Activated naive CD8-positive, alpha-beta T cell treated with anti-CD3 and anti-CD28 coated beads, Interleukin-2, amount 10 ng/mL, durations not matched to agents 7 days and 5 days (primary cell): ENCODE measurements at regions of chr5 and their contacts with region 1.

Region 1: DNA sequence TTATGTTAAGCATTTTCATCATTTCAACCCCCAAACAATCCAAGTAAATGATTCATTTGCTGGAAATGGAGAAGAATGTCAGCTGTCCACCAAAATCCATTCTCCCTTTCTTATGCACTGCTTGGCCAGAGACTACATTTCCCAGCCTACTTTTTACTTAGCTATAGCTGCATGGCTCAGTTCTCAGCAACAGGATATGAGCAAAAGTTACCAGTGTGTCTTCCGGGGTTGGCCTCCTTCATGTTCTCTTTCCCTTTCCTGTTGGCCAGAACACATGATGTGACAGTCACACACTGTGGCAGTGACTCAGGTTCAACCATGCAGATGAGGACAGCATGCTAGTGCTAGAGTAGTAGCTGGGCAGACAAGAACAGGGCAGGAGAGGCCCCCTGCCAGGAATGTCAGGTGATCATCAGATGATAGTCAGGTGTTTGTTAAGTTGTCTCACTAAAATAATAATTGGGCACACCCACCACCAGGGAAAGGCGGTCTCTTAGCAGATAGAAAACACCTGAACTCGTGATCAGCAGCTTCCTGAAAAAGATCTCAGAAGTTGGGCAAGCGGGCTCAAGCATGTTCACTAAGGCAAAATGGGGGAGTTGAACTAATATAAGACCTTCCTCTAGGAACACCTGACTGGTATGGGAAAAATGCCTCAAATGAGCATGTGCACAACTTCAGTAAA is 12.2 kb downstream of the GPR150 start:
- DNase-seq: peak; percentile 57
- ATAC-seq: peak; percentile 100
- H3K4me3 Mint-ChIP-seq: peak overlapping the region; percentile 44
- H3K27ac Mint-ChIP-seq: peak overlapping the region; percentile 94
- H3K4me1 Mint-ChIP-seq: peaks cover 10% of the 10 kb centered on the region
- H3K27me3 Mint-ChIP-seq: peaks cover 8% of the 10 kb centered on the region

Region 2: GRCh38 chr5:95620030-95620869 is 11.9 kb before region 1 on chr5 and contains the start of gene GPR150:
- POLR2A ChIA-PET with region 1: interaction called, 20 read pairs
- DNase-seq: peak; percentile 81
- ATAC-seq: peak; percentile 68
- H3K4me3 Mint-ChIP-seq: peak within 1 kb of the TSS; percentile 89
- H3K27ac Mint-ChIP-seq: peak within 1 kb of the TSS; percentile 74
- H3K4me1 Mint-ChIP-seq: peaks cover 35% of the 10 kb centered on the region
- H3K27me3 Mint-ChIP-seq: peaks cover 2% of the 10 kb centered on the region
- total RNA-seq, gene GPR150: 1.0 to 1.2 TPM